B cell (primary cell): ENCODE measurements at regions of chr16 and their contacts with region 1.

Region 1: DNA sequence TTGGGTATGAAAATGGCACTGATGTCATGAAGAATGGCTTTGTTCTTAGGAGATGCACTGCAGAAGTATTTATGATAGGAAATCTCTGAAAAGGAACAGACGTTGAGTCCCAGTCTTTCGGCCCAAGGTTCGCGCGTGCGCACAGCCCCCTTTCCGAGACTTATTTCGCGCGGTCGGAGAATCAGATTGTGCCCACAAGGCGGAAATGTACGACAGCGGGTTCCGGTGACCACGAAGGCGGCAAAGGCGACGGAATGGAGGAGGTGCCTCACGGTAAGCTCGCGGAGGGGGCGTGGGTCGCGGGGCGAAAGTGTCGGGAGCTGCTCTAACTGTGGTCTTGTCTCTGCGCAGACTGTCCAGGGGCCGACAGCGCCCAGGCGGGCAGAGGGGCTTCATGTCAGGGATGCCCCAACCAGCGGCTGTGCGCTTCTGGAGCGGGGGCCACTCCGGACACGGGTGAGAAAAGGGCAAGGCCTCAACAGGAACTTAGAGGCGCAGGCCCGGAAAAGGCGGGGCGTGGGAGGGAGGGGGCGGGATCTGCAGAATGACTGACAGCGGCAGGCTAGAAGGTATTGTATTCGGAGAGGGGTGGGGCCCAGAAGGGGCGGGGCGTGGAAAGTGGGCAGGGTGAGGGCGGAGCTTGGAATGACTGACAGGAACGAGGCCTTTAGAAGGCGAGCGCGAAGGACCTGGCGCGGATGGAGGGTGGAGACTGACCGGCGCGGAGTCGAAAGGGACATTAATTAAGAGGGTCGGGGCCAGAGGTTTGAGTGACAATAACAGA is at the start of gene NUBP1:
- DNase-seq: peak; percentile 100
- ATAC-seq: peak; percentile 93
- H3K4me3 ChIP-seq: peak within 1 kb of the TSS; percentile 61 to 85 (median 73)
- H3K4me3 Mint-ChIP-seq: peak within 1 kb of the TSS; percentile 93
- H3K27ac ChIP-seq: peak within 1 kb of the TSS; percentile 93 to 97
- H3K27ac Mint-ChIP-seq: peak within 1 kb of the TSS; percentile 97
- H3K4me1 ChIP-seq: peaks cover 31 to 37% of the 10 kb centered on the region in 2 donors
- H3K4me1 Mint-ChIP-seq: peaks cover 55% of the 10 kb centered on the region
- H3K27me3 ChIP-seq: no peaks in the 10 kb centered on the region
- H3K27me3 Mint-ChIP-seq: no peaks in the 10 kb centered on the region
- CTCF ChIP-seq: no peak
- total RNA-seq, gene NUBP1: 54.3 and 67.3 TPM in 2 replicates

Region 2: GRCh38 chr16:10883004-10883403 is 139.2 kb after region 1 on chr16:
- CTCF ChIA-PET with region 1: interaction called, 21 read pairs
- POLR2A ChIA-PET with region 1: interaction called, 38 read pairs
- intact Hi-C with region 1: no loop called
- DNase-seq: no peak
- ATAC-seq: no peak
- H3K4me3 ChIP-seq: peak overlapping the region in 2 of 5 experiments; percentile 4 to 8
- H3K4me3 Mint-ChIP-seq: peak overlapping the region; percentile 77
- H3K27ac ChIP-seq: peak overlapping the region; percentile 31 to 74
- H3K27ac Mint-ChIP-seq: peak overlapping the region; percentile 87
- H3K4me1 ChIP-seq: peaks cover 75 to 87% of the 10 kb centered on the region in 2 donors
- H3K4me1 Mint-ChIP-seq: peaks cover 74% of the 10 kb centered on the region
- H3K27me3 ChIP-seq: no peaks in the 10 kb centered on the region
- H3K27me3 Mint-ChIP-seq: no peaks in the 10 kb centered on the region
- CTCF ChIP-seq: no peak

Region 3: GRCh38 chr16:10944249-10945064 is 200.7 kb after region 1 on chr16 and contains the start of gene CLEC16A:
- CTCF ChIA-PET with region 1: no interaction called
- POLR2A ChIA-PET with region 1: interaction called, 6 read pairs
- intact Hi-C with region 1: loop called (anchors 1 kb)
- DNase-seq: peak; percentile 96
- ATAC-seq: peak; percentile 71
- H3K4me3 ChIP-seq: peak within 1 kb of the TSS; percentile 64 to 91 (median 77)
- H3K4me3 Mint-ChIP-seq: peak within 1 kb of the TSS; percentile 90
- H3K27ac ChIP-seq: peak within 1 kb of the TSS; percentile 54 to 83
- H3K27ac Mint-ChIP-seq: peak within 1 kb of the TSS; percentile 81
- H3K4me1 ChIP-seq: peaks cover 69 to 79% of the 10 kb centered on the region in 2 donors
- H3K4me1 Mint-ChIP-seq: peaks cover 78% of the 10 kb centered on the region
- H3K27me3 ChIP-seq: no peaks in the 10 kb centered on the region
- H3K27me3 Mint-ChIP-seq: no peaks in the 10 kb centered on the region
- CTCF ChIP-seq: no peak
- total RNA-seq, gene CLEC16A: 79.5 and 82.3 TPM in 2 replicates

Region 4: GRCh38 chr16:11459722-11460121 is 715.9 kb after region 1 on chr16:
- CTCF ChIA-PET with region 1: no interaction called
- POLR2A ChIA-PET with region 1: no interaction called
- intact Hi-C with region 1: no loop called
- DNase-seq: no peak
- ATAC-seq: no peak
- H3K4me3 ChIP-seq: no peak overlapping the region
- H3K4me3 Mint-ChIP-seq: no peak overlapping the region
- H3K27ac ChIP-seq: no peak overlapping the region
- H3K27ac Mint-ChIP-seq: no peak overlapping the region
- H3K4me1 ChIP-seq: no peaks in the 10 kb centered on the region
- H3K4me1 Mint-ChIP-seq: peaks cover 2% of the 10 kb centered on the region
- H3K27me3 ChIP-seq: no peaks in the 10 kb centered on the region
- H3K27me3 Mint-ChIP-seq: no peaks in the 10 kb centered on the region
- CTCF ChIP-seq: no peak

Region 5: GRCh38 chr16:11682655-11683096 is 938.9 kb after region 1 on chr16:
- CTCF ChIA-PET with region 1: no interaction called
- POLR2A ChIA-PET with region 1: no interaction called
- intact Hi-C with region 1: loop called (anchors 5 kb)
- DNase-seq: peak; percentile 85
- ATAC-seq: peak; percentile 5
- H3K4me3 ChIP-seq: peak overlapping the region in 2 of 5 experiments; percentile 0 to 35
- H3K4me3 Mint-ChIP-seq: peak overlapping the region; percentile 78
- H3K27ac ChIP-seq: peak overlapping the region; percentile 95 to 99
- H3K27ac Mint-ChIP-seq: peak overlapping the region; percentile 91
- H3K4me1 ChIP-seq: peaks cover 96 to 97% of the 10 kb centered on the region in 2 donors
- H3K4me1 Mint-ChIP-seq: peaks cover 96% of the 10 kb centered on the region
- H3K27me3 ChIP-seq: no peaks in the 10 kb centered on the region
- H3K27me3 Mint-ChIP-seq: no peaks in the 10 kb centered on the region
- CTCF ChIP-seq: no peak

Region 6: GRCh38 chr16:11851294-11852091 is 1107.7 kb after region 1 on chr16 and contains the start of gene RSL1D1:
- CTCF ChIA-PET with region 1: no interaction called
- POLR2A ChIA-PET with region 1: no interaction called
- intact Hi-C with region 1: loop called (anchors 5 kb)
- DNase-seq: peak; percentile 98
- ATAC-seq: peak; percentile 88
- H3K4me3 ChIP-seq: peak within 1 kb of the TSS; percentile 73 to 97 (median 91)
- H3K4me3 Mint-ChIP-seq: peak within 1 kb of the TSS; percentile 97
- H3K27ac ChIP-seq: peak within 1 kb of the TSS; percentile 81 to 94
- H3K27ac Mint-ChIP-seq: peak within 1 kb of the TSS; percentile 97
- H3K4me1 ChIP-seq: peaks cover 18 to 27% of the 10 kb centered on the region in 2 donors
- H3K4me1 Mint-ChIP-seq: peaks cover 40% of the 10 kb centered on the region
- H3K27me3 ChIP-seq: no peaks in the 10 kb centered on the region
- H3K27me3 Mint-ChIP-seq: no peaks in the 10 kb centered on the region
- CTCF ChIP-seq: no peak
- total RNA-seq, gene RSL1D1: 146 and 167 TPM in 2 replicates